ENCODE measurements at regions of chr5 and their contacts with region 1.

Region 1: DNA sequence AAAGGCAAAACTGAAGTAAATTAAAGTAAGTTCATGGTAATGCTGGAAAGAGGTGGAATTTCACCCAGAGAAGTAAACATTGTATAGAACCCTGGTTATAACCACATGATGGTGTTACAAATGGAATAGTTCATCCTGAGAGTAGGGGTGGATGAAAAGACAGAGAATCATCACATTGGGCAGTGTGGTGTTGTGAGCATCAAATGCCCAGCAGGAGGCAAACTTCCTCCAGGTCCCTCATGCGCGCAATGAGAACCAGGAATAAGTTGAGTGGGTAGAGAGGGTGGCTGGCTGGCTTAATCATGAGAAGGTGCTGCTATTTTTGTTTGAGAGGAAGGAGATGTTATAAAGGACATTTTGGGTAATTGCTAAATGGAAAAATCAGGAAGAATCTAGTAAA is 163.3 kb upstream of the HMHB1 start:
- DNase-seq: peak; percentile 26
- ATAC-seq: no peak
- H3K4me3 Mint-ChIP-seq: no peak overlapping the region
- H3K27ac Mint-ChIP-seq: no peak overlapping the region
- H3K4me1 Mint-ChIP-seq: peaks cover 17% of the 10 kb centered on the region
- H3K27me3 Mint-ChIP-seq: no peaks in the 10 kb centered on the region

Region 2: GRCh38 chr5:143629871-143630659 is 18.6 kb before region 1 on chr5:
- CTCF ChIA-PET with region 1: no interaction called
- POLR2A ChIA-PET with region 1: no interaction called
- intact Hi-C with region 1: no loop called
- DNase-seq: no peak
- ATAC-seq: no peak
- H3K4me3 Mint-ChIP-seq: no peak overlapping the region
- H3K27ac Mint-ChIP-seq: peak overlapping the region; percentile 19
- H3K4me1 Mint-ChIP-seq: peaks cover 4% of the 10 kb centered on the region
- H3K27me3 Mint-ChIP-seq: peaks cover 1% of the 10 kb centered on the region

Region 3: DNA sequence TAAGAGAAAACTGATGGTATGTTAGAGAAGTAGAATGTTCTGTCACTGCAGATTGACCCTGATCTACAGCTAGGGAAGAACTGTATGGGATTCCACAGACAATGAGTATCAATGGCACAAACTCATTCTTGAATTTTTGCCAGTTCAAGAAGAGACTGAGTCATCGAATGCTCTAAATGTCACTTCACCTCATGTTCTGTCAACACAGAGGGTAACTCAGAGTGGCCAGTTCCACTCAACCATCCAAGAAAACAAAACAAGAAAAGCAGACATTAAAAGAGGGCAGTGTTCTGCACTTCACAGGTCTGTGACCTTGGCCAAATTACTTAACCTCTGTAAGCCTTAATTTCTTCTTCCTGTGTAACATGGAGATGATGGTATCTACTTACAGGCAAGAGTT is 31.1 kb after region 1 on chr5:
- CTCF ChIA-PET with region 1: no interaction called
- POLR2A ChIA-PET with region 1: no interaction called
- intact Hi-C with region 1: loop called (anchors 1 to 2 kb)
- DNase-seq: no peak
- ATAC-seq: peak; percentile 71
- H3K4me3 Mint-ChIP-seq: no peak overlapping the region
- H3K27ac Mint-ChIP-seq: no peak overlapping the region
- H3K4me1 Mint-ChIP-seq: peaks cover 26% of the 10 kb centered on the region
- H3K27me3 Mint-ChIP-seq: peaks cover 2% of the 10 kb centered on the region

Measured in activated CD4-positive, alpha-beta T cell treated with anti-CD3 and anti-CD28 coated beads for 36 hours (primary cell).